ENCODE measurements at regions of chr19 and their contacts with region 1.

Region 1: DNA sequence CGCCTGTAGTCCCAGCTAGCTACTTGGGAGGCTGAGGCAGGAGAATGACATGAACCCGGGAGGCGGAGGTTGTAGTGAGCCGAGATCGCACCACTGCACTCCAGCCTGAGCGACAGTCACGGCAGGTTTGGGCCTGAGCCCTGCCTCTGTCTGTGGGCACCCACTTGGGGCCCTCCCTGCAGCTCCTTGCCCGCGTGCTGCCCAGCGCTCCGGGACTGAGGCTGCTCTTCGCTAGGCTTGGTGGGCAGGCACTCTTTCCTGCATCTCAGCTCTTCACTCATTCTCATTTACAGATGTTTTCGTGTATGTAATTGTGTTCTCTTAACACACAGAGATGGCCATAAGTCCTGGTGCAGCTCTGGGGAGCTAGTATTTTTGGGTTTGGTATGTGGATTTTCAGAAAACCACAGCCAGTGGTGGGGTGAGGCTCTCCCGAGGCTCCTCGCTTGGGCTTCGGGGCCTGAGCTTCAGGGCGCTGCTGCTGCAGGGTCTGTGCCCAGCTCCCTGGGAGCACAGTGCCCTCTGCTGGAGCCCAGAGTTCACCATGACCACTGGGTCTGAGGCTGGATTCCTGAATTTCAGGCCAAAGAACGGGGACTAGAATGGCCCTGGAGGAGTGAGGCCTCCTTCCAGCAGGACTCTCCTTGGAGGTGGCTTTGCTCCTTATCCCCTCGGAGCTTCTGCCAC is 15.2 kb downstream of the UPF1 start:
- DNase-seq: peak; percentile 79
- H3K4me3 Mint-ChIP-seq: no peak overlapping the region
- H3K27ac Mint-ChIP-seq: peak overlapping the region; percentile 68
- H3K4me1 Mint-ChIP-seq: peaks cover 55% of the 10 kb centered on the region
- H3K27me3 Mint-ChIP-seq: no peaks in the 10 kb centered on the region

Region 2: GRCh38 chr19:18469069-18469846 is 377.7 kb before region 1 on chr19:
- CTCF ChIA-PET with region 1: interaction called, 12 read pairs
- DNase-seq: peak; percentile 68
- H3K4me3 Mint-ChIP-seq: no peak overlapping the region
- H3K27ac Mint-ChIP-seq: peak overlapping the region; percentile 55
- H3K4me1 Mint-ChIP-seq: peaks cover 6% of the 10 kb centered on the region
- H3K27me3 Mint-ChIP-seq: no peaks in the 10 kb centered on the region

Region 3: GRCh38 chr19:18831524-18832305 is 15.3 kb before region 1 on chr19 and contains the start of gene UPF1:
- CTCF ChIA-PET with region 1: interaction called, 12 read pairs
- DNase-seq: peak; percentile 97
- H3K4me3 Mint-ChIP-seq: peak within 1 kb of the TSS; percentile 87
- H3K27ac Mint-ChIP-seq: peak within 1 kb of the TSS; percentile 92
- H3K4me1 Mint-ChIP-seq: peaks cover 37% of the 10 kb centered on the region
- H3K27me3 Mint-ChIP-seq: peaks cover 29% of the 10 kb centered on the region

Region 4: DNA sequence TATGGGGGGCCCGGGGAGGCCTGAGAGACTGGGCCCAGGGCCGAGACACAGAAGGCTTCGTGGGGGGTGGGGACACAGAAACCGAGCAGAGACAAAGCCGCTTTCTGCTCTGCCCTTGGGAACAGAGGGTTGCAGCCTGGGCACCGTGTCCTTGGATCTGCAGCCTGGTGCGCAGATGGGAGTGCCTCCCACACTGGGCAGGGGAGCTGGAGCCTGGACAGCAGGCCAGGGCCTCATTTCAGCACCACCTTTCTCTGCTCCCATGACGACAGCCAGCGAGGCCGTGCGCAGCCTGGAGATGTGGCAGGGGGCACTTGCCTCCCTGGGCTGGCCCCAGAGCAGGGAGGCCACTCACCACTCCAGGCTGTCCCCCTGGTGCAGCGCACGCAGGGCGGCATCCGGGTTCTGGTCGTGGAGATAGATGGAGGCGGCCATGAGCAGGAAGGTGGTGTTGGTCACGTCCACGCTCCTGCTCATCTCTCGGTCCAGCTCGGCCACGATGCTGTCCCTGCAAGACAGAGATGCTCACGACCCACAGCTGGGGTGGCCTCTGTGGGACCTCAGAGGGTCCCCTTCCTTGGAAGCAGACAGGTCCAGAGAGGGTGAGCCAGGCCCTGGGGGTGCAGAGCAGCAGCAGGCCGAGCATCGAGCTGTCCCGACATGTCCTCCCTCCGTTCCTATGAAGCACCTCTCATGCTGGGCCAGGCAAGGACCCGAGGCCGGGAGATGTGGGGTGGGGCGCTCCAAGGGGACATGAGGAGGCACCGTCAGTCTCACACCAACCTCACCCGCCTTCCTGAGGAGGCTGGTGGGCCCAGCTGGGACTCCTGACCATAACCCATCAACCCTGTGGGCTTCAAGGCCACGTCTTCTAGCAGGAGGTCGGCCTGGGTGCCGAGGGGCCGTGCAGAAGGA is 59.9 kb after region 1 on chr19:
- CTCF ChIA-PET with region 1: no interaction called
- DNase-seq: no peak
- H3K4me3 Mint-ChIP-seq: no peak overlapping the region
- H3K27ac Mint-ChIP-seq: no peak overlapping the region
- H3K4me1 Mint-ChIP-seq: no peaks in the 10 kb centered on the region
- H3K27me3 Mint-ChIP-seq: no peaks in the 10 kb centered on the region

Region 5: DNA sequence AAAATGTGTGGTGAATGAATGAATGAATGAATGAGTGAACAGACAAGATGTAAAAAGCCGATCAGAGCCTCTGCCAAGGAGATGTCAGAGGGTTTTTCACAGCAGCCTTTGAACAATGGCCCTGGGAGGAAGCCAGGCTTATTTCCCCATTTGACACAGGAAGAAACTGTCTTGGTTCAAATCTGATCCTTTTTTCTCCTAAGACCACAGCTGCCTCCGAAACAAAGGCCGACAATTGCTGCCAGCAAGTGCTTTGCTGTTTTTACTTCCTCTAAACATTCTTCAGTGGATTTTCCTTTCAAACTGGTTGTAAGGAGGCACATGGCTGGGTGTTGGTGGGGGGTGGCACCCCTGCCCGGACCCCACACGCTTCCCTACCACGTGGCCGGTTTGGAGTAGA is 138.3 kb after region 1 on chr19:
- CTCF ChIA-PET with region 1: no interaction called
- DNase-seq: no peak
- H3K4me3 Mint-ChIP-seq: no peak overlapping the region
- H3K27ac Mint-ChIP-seq: no peak overlapping the region
- H3K4me1 Mint-ChIP-seq: no peaks in the 10 kb centered on the region
- H3K27me3 Mint-ChIP-seq: peaks cover 73% of the 10 kb centered on the region

Measured in activated naive CD4-positive, alpha-beta T cell treated with anti-CD3 and anti-CD28 coated beads, Interleukin-2, amount 10 ng/mL, durations not matched to agents 7 days and 5 days (primary cell).